ENCODE measurements at regions of chr10 and their contacts with region 1.

Region 1: DNA sequence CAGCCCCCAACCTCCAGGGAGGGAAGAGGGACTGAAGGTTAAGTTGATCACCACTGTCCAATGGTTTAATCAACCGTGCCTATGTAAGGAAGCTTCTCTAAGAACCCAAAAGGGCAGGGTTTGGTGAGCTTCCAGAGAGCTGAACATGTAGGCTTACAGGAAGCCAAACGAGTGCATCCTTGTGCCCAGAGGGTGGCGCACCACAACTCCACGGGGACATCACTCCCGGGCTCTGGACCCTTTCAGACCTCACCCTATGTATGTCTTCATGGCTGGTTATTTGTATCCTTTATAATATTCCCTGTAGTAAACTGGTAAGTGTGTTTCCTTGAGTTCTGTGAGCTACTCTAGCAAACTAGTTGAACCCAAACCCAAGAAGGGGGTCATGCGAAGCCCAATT is 11.5 kb upstream of the NFKB2 start:
- DNase-seq: no peak
- ATAC-seq: peak; percentile 28
- H3K4me3 Mint-ChIP-seq: no peak overlapping the region
- H3K27ac Mint-ChIP-seq: peak overlapping the region; percentile 50
- H3K4me1 Mint-ChIP-seq: peaks cover 18% of the 10 kb centered on the region
- H3K27me3 Mint-ChIP-seq: no peaks in the 10 kb centered on the region
- CTCF ChIP-seq: no peak

Region 2: DNA sequence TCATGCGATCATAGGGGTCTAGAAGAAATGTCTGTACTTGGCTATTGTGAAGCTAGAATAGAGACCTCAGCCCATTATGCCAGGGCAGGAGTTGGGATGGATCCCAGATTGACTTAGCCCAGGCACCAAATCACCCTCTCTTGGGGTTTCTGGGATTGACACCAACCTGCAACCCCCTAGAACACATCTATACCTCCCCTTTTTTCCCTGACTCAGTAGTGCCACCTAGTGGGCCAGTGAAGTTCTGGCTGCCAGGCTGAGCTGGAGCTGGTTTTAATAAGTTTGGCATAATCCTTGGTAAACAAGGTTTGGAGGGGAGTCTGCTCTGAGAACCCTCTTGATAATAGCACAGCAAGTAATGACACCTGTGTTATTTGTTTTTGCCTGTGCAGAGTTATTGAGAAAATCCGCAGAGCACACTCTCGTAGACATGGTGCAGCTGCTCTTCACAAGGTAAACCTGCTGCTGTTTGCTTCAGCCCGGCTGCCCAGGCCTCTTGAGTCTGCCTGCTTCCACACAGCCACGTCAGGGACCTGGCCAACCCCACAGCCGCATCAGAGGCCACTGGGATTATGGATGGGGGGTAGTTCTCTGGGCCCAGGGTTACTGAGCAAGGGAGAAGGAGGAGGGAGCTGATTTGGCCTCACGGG is 31.9 kb before region 1 on chr10:
- CTCF ChIA-PET with region 1: interaction called, 12 read pairs
- POLR2A ChIA-PET with region 1: interaction called, 3 read pairs
- intact Hi-C with region 1: no loop called
- DNase-seq: peak; percentile 45
- ATAC-seq: peak; percentile 70
- H3K4me3 Mint-ChIP-seq: no peak overlapping the region
- H3K27ac Mint-ChIP-seq: no peak overlapping the region
- H3K4me1 Mint-ChIP-seq: no peaks in the 10 kb centered on the region
- H3K27me3 Mint-ChIP-seq: no peaks in the 10 kb centered on the region
- CTCF ChIP-seq: peak; percentile 81

Region 3: DNA sequence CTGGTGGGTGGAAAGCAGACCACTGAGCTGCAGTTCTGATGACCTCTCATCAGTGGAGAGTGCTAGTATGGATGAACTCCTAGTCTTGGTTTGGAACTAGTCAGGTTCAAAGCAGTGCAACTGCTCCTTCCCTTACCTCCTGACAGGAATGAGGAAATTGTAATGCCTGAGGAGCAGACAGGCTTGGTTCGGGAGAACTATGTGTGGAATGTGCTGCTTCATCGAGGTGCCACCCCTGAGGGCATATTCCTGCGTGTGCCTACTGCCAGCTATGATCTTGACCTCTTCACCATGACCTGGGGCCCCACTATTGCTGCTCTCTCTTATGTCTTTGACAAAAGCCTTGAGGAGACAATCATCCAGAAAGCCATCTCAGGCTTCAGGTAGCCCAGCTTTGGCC is 16.0 kb before region 1 on chr10:
- CTCF ChIA-PET with region 1: interaction called, 7 read pairs
- POLR2A ChIA-PET with region 1: interaction called, 14 read pairs
- intact Hi-C with region 1: no loop called
- DNase-seq: no peak
- ATAC-seq: no peak
- H3K4me3 Mint-ChIP-seq: no peak overlapping the region
- H3K27ac Mint-ChIP-seq: no peak overlapping the region
- H3K4me1 Mint-ChIP-seq: no peaks in the 10 kb centered on the region
- H3K27me3 Mint-ChIP-seq: no peaks in the 10 kb centered on the region
- CTCF ChIP-seq: no peak

Region 4: GRCh38 chr10:102399217-102400089 is 15.4 kb after region 1 on chr10:
- CTCF ChIA-PET with region 1: interaction called, 19 read pairs
- POLR2A ChIA-PET with region 1: interaction called, 99 read pairs
- intact Hi-C with region 1: no loop called
- DNase-seq: peak; percentile 87
- ATAC-seq: peak; percentile 37
- H3K4me3 Mint-ChIP-seq: peak overlapping the region; percentile 94
- H3K27ac Mint-ChIP-seq: peak overlapping the region; percentile 97
- H3K4me1 Mint-ChIP-seq: peaks cover 54% of the 10 kb centered on the region
- H3K27me3 Mint-ChIP-seq: no peaks in the 10 kb centered on the region
- CTCF ChIP-seq: peak; percentile 95

Region 5: GRCh38 chr10:102408728-102409603 is 24.9 kb after region 1 on chr10:
- CTCF ChIA-PET with region 1: no interaction called
- POLR2A ChIA-PET with region 1: interaction called, 16 read pairs
- intact Hi-C with region 1: no loop called
- DNase-seq: peak; percentile 36
- ATAC-seq: peak; percentile 45
- H3K4me3 Mint-ChIP-seq: peak overlapping the region; percentile 59
- H3K27ac Mint-ChIP-seq: no peak overlapping the region
- H3K4me1 Mint-ChIP-seq: peaks cover 40% of the 10 kb centered on the region
- H3K27me3 Mint-ChIP-seq: peaks cover 42% of the 10 kb centered on the region
- CTCF ChIP-seq: no peak

Measured in activated B cell treated with CpG ODN at 0.5 μM for 24 hours (primary cell).